ENCODE measurements at regions of chr17 and their contacts with region 1.

Region 1: DNA sequence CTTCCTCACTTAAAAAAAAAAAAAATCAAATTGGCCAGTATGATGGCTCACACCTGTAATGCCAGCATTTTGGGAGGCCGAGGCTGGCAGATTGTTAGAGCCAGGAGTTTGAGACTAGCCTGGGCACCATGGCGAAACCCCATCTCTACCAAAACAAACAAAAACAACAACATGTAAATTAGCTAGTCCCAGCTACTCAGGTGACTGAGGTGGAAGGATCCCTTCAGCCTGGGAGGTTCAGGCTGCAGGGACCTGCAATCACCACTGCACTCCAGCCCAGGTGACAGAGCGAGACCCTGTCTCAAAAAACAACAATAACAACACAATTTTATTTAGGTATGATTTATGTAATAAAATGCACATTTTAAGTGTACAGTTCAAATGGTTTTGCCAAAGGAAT is 6.3 kb upstream of the EPOP start:
- DNase-seq: no peak
- H3K4me3 ChIP-seq: no peak overlapping the region
- H3K27ac ChIP-seq: no peak overlapping the region
- H3K4me1 ChIP-seq: no peaks in the 10 kb centered on the region
- H3K27me3 ChIP-seq: no peaks in the 10 kb centered on the region
- CTCF ChIP-seq: no peak
- EP300 ChIP-seq: no peak
- POLR2A ChIP-seq: no peak

Region 2: DNA sequence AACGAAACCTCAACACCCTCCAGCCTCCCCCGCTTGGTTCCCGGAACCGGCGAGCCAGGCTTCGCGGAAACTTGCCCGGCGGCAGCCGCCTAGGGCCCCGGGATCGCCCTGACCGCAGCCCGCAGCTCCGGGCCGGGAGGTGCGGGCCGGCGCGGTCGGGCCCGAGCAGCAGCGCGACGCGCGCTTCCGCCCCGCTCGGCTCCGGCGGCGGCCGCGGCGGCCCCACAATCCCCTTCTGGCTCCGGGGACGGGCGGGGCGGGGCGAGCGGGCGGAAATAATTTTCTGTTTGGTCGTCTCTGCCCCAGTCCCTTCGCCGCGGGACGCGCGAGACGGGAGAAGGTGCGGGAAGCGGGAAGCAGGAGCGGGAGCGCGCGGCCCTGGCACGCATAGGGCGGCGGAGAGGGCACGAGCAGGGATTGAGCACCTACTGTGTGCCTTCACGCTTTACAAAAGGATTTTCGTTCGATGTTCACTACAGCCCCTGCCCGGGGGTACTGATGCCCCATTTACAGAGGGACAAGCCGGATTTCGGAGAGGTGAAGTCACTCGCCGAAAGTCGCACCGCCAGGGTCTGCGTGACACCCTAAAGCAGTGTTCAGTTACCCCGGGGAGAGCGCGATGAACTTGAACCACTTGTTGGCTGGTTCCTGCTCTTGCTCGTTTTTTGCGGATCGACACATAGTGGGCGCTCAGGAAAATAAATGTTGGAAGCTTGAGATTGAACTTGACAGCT is 21.2 kb after region 1 on chr17:
- intact Hi-C with region 1: loop called in 1 of 4 experiments (anchors 2 kb)
- DNase-seq: peak; percentile 87 to 91 (median 88)
- H3K4me3 ChIP-seq: peak overlapping the region; percentile 86
- H3K27ac ChIP-seq: peak overlapping the region; percentile 49 to 93
- H3K4me1 ChIP-seq: peaks cover 13% of the 10 kb centered on the region
- H3K27me3 ChIP-seq: no peaks in the 10 kb centered on the region
- CTCF ChIP-seq: peak in 1 of 3 donors; percentile 18
- EP300 ChIP-seq: no peak
- POLR2A ChIP-seq: peak; percentile 93